ENCODE measurements at regions of chr10 and their contacts with region 1.

Region 1: GRCh38 chr10:118720685-118721538 is 33.9 kb downstream of the CACUL1 start:
- DNase-seq: peak; percentile 45
- CTCF ChIP-seq: peak; percentile 73

Region 2: GRCh38 chr10:118701529-118702323 is 19.2 kb before region 1 on chr10:
- CTCF ChIA-PET with region 1: interaction called, 28 read pairs
- POLR2A ChIA-PET with region 1: no interaction called
- DNase-seq: no peak
- CTCF ChIP-seq: no peak

Region 3: DNA sequence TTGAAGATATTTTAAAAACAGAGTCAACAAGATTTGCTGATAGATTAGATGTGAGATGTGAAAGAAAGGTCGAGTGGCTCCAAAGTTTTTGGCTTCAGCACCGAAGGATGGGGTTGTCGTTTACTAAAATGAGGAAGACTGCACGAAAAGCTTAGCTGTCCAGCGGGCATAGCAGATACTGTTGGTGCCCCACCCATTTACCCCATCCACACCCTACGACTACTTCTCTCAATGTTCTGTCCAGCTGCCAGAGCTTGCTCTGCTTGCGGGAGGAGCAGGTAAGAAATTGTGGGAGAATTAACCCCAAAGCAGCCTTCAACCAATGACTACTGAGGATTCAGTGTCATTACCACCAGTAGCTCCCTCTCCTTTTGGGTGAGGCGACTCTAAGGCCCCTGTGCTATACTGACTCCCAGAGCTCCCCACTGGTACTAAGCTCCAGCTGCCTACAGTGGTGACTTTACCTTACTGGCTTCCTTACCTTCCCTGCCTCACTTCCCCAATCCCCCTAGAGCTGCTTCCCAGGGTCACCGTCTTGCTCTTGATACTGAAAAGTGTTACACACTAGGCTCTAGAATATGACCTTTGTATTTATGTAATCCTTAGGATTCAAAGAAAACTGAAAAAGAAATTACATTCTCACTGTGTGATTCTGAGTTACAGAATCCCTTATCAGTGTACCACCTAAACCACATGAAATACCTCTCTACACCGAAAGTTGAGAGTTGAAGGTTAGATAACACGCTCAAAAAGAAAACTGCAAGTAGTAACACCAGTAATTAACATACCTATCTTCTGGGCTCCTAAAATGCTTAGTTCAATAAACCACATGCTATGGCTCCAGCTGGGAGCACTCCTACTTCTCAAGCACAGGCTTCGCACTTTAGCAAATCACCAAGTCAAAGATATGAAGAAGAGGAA is 11.6 kb after region 1 on chr10:
- CTCF ChIA-PET with region 1: interaction called, 51 read pairs
- POLR2A ChIA-PET with region 1: no interaction called
- DNase-seq: no peak
- CTCF ChIP-seq: no peak